HEK293 (cell line): ENCODE measurements at regions of chr15 and their contacts with region 1.

Region 1: DNA sequence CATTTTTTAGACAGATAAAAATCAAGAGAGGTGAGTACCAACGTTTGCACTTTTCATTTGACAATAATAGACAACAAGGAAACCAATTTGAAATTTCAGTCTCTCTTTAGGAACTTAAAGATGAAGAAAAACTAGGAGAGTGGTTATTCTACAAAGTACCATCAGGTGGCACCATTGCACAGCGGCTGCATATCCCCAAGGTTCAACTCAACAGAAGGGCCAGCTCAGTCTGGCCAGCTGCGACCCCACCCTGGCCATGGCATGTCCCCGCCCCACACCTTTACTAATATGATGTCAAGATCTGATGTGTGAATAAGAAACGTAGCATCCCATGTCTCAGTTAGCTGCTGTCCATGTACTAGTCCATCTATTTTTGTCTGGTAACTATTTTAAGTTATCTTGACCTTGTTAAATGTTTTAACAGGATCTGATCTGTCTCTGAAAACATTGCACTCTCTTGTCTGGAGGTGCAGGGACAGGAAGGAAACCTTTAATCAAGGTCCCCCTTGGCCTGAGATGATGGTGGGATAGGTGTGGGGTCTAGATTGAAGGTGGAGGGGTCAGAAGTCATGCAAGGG is 35.5 kb upstream of the CGNL1 start:
- H3K4me3 ChIP-seq: no peak overlapping the region
- H3K27ac ChIP-seq: no peak overlapping the region
- H3K4me1 ChIP-seq: no peaks in the 10 kb centered on the region
- CTCF ChIP-seq: peak; percentile 44; the same call in 1 of the 2 replicates

Region 2: GRCh38 chr15:57100136-57100539 is 240.6 kb before region 1 on chr15:
- CTCF ChIA-PET with region 1: no interaction called
- POLR2A ChIA-PET with region 1: no interaction called
- H3K4me3 ChIP-seq: no peak overlapping the region
- H3K27ac ChIP-seq: no peak overlapping the region
- H3K4me1 ChIP-seq: no peaks in the 10 kb centered on the region; the same call in 1 of the 2 replicates
- CTCF ChIP-seq: no peak

Region 3: DNA sequence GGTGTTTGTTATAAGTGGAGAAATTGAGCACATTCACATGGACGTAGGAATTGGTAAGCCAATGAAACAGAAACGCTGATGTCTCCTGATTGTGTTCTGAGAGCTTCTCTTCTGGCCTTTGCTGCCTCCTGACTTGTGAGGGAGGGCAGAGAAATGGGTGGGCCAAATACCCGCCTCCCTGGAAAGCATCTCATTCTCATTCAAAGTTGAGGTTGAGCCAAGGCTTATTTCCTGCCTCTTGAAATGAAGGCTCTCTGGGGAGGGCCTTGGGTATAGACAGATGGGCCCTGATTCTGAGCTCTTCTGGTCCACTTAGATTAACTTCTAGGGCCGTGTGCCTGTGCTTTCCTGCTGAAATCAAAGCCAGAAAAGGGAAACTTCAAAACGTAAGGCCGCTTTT is 193.5 kb after region 1 on chr15:
- CTCF ChIA-PET with region 1: interaction called, 201 read pairs
- POLR2A ChIA-PET with region 1: no interaction called
- H3K4me3 ChIP-seq: no peak overlapping the region
- H3K27ac ChIP-seq: no peak overlapping the region
- H3K4me1 ChIP-seq: peaks cover 2% of the 10 kb centered on the region; the same call in 1 of the 2 replicates
- CTCF ChIP-seq: no peak

Region 4: DNA sequence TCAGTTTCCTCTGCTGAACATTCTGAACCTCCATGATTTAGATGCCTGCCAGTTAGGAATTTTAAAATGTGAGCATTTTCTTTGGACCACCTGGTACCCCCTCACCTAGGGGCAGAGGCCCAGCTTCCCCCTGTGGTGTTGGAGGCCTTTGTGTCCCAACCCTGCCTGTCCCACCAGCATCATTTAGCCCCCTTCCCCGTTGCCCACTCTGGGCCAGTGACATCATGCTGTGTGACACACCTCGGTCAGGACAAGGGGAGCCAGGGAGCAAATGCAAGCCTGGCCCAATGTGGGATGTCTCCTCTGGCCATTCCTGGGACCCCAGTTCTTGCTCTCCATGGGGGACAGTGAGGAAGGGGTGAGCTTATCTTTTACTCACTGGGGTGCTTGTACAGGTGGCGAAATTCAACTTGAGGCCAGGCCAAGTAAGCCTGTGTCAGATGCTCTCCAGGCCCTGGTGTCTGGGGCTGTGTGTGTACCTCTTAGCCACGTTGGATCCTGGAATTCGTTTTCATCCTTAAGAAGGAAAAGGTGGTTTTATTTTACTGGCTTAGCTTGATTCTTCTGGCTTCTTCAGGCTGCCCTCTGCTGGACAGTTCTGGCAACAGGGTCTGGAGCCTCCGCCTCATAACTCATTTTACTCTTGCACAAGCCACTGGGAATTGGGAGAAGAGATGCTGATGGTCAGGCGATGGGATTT is 201.2 kb after region 1 on chr15:
- CTCF ChIA-PET with region 1: interaction called, 25 read pairs
- POLR2A ChIA-PET with region 1: no interaction called
- H3K4me3 ChIP-seq: no peak overlapping the region
- H3K27ac ChIP-seq: no peak overlapping the region
- H3K4me1 ChIP-seq: peaks cover 2% of the 10 kb centered on the region; the same call in 1 of the 2 replicates
- CTCF ChIP-seq: peak; percentile 14; the same call in 1 of the 2 replicates